Cardiac septum (tissue), 1 donor: ENCODE measurements at regions of chr19 and their contacts with region 1.

Region 1: GRCh38 chr19:44689056-44689895 is 9.7 kb upstream of the CEACAM16 start:
- DNase-seq: peak; percentile 84

Region 2: GRCh38 chr19:44718441-44719261 is 29.4 kb after region 1 on chr19:
- intact Hi-C with region 1: loop called (anchors 2 kb)
- DNase-seq: peak; percentile 84

Region 3: GRCh38 chr19:44732615-44733014 is 43.3 kb after region 1 on chr19:
- intact Hi-C with region 1: no loop called
- DNase-seq: no peak

Region 4: DNA sequence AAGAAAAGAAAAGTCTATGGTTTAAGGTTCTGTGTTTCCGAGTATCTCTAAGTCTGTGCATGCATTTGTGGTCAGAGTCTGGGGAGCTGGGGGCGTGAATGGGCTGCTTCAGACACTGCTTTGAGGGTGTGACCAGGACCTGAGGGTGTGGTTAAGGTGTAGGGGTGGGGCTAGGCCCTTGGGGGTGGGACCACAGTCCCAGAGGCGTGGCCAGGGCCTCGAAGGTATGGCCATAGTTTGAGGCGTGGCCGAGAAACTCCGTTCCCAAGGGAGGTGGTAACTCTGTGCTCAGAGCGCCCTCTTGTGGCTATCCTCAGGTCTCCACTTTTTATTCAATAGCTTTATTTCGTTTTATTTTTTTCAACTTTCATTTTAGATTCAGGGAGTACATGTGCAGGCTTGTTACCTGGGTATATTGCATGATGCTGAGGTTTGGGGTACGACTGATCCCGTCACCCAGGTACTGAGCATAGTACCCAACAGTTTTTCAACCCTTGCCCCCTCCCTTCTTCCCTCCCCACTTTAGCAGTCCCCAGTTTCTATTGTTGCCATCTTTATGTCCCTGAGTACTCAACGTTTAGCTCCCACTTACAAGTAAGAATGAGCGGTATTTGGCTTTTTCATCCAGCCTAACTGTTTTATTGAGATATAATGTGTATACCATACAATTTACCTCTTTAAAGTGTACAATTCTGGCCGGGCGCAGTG is 81.4 kb after region 1 on chr19:
- intact Hi-C with region 1: loop called (anchors 2 kb)
- DNase-seq: peak; percentile 97

Region 5: DNA sequence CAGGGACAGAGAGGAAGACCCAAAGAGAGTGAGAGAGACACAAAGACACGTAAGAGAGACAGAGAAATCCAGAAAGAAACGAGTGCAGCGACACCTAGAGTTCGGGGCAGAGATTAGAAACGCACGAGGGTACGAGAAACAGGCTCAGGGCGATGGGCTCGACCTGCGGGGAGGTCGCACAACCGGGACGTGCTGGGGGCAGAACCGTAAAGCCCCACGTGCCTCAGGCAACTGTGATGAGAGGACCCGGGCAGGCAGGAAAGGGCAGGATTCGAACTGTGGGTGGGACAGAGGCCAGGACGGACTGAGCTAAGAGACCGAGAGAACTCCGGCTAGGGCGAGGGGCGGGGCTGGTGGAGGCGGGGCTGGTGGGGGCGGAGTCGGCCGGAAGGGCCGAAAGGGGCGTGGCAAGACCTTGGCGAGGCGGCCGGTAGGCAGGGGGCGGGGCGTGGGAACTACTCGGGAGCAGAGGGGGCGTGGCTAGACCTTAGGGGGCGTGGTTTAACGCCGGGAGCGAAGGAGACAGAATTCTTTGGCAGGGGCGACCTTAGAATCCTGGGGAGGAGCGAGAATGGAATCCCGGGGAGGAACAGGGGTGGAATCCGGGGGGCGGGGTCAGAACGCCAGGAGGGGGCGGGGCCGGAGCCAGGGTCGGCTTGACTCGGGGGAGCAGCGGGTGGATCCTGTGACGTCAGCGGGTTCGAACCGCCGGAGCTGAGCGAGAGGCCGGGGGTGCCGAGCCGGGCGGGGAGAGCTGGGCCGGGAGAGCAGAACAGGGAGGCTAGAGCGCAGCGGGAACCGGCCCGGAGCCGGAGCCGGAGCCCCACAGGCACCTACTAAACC is 156.6 kb after region 1 on chr19 and contains the start of gene NECTIN2:
- intact Hi-C with region 1: no loop called
- DNase-seq: peak; percentile 100
- total RNA-seq, gene NECTIN2: 60.0 TPM

Region 6: DNA sequence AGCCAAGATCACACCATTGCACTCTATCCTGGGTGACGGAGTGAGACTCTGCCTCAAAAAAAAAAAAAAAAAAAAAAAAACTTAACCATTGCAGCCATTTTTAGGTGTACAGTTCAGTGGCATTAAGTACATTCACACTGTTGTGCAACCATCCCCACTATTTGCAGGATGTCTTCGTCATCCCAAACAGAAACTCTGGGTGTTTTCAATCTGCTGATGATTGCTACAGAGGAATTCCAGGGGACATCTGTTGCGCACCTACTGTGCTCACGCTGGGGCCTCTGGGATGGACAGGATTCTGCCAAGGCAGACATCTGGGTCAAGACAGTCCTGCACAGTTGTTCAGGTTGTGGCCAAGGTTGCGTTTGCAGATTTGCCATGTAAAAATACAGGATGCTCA is 250.4 kb after region 1 on chr19:
- intact Hi-C with region 1: no loop called
- DNase-seq: no peak